ENCODE measurements at regions of chr10 and their contacts with region 1.

Region 1: GRCh38 chr10:103685880-103686669 is 169.3 kb downstream of the SH3PXD2A start:
- DNase-seq: peak; percentile 86
- H3K4me3 ChIP-seq: peak overlapping the region in 1 of 2 experiments; percentile 24; a peak in 1 of 4 replicates
- H3K27ac ChIP-seq: no peak overlapping the region
- H3K4me1 ChIP-seq: peaks cover 0 to 4% of the 10 kb centered on the region in 2 experiments; a peak in 1 of 4 replicates
- H3K27me3 ChIP-seq: no peaks in the 10 kb centered on the region
- CTCF ChIP-seq: peak; percentile 95
- EP300 ChIP-seq: no peak
- RAD21 ChIP-seq: peak; percentile 85

Region 2: GRCh38 chr10:103542764-103543616 is 143.1 kb before region 1 on chr10:
- CTCF ChIA-PET with region 1: no interaction called
- POLR2A ChIA-PET with region 1: no interaction called
- DNase-seq: peak; percentile 82
- H3K4me3 ChIP-seq: peak overlapping the region; percentile 32 to 63; a peak in 3 of 4 replicates
- H3K27ac ChIP-seq: peak overlapping the region in 1 of 2 experiments; percentile 91; a peak in 2 of 4 replicates
- H3K4me1 ChIP-seq: peaks cover 8 to 43% of the 10 kb centered on the region in 2 experiments; a peak in 3 of 4 replicates
- H3K27me3 ChIP-seq: peaks cover 15% of the 10 kb centered on the region; the same call in 1 of the 2 replicates
- CTCF ChIP-seq: peak; percentile 60
- EP300 ChIP-seq: peak in 1 of 2 experiments; percentile 74; a peak in 2 of 4 replicates
- RAD21 ChIP-seq: peak; percentile 54

Region 3: GRCh38 chr10:103592186-103593021 is 93.7 kb before region 1 on chr10:
- CTCF ChIA-PET with region 1: interaction called, 129 read pairs
- POLR2A ChIA-PET with region 1: no interaction called
- DNase-seq: peak; percentile 91
- H3K4me3 ChIP-seq: no peak overlapping the region; a peak in 1 of 4 replicates
- H3K27ac ChIP-seq: peak overlapping the region in 1 of 2 experiments; percentile 7; a peak in 1 of 4 replicates
- H3K4me1 ChIP-seq: peaks cover 0 to 15% of the 10 kb centered on the region in 2 experiments; a peak in 1 of 4 replicates
- H3K27me3 ChIP-seq: no peaks in the 10 kb centered on the region
- CTCF ChIP-seq: peak; percentile 71
- EP300 ChIP-seq: no peak
- RAD21 ChIP-seq: peak; percentile 79

Region 4: DNA sequence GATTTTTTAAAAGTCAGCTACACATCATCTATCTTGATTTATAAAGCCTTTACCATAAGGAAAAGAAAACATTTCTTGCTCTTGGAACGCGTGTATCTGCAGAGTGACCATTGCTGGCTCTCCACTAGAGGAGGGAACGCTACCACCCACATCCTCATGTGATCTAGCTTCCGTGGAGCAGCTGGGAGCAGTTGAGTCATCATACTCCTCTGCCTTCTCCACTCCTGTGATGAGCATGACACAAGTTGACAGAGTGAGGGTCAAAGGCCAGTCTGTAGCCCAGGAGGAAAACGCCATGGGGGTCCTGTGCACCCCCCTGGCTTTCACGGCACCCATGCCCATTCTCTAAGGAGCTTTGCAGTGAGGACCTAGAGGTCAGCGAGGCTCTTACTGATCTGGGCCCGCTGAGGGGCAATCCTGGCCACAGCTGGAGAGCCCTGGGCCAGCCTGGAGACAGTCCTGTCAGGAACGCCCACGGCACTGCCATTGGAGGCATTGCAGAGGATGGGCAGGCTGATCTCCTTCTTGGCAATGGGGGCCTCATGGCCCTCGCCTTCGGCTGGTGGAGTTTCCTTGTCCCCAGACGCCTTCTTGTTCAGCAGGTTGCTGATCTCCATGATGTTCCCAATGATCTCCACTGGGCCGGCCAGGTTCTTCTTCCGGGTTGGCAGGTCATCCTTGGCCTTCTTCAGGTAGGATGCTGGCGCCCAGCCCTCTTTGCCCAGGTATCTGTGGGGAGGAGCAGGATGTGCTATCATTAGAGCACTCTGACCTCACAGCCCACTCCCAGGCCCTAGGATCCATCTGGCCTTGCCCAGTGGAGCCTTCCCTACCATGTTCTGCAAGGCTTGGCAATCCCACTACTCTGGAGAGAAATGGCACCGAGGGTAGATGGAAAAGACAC is 73.4 kb before region 1 on chr10:
- CTCF ChIA-PET with region 1: interaction called, 59 read pairs
- POLR2A ChIA-PET with region 1: no interaction called
- DNase-seq: no peak
- H3K4me3 ChIP-seq: no peak overlapping the region
- H3K27ac ChIP-seq: peak overlapping the region in 1 of 2 experiments; percentile 95; a peak in 2 of 4 replicates
- H3K4me1 ChIP-seq: peaks cover 0 to 67% of the 10 kb centered on the region in 2 experiments; a peak in 2 of 4 replicates
- H3K27me3 ChIP-seq: no peaks in the 10 kb centered on the region
- CTCF ChIP-seq: no peak
- EP300 ChIP-seq: no peak
- RAD21 ChIP-seq: no peak

Region 5: DNA sequence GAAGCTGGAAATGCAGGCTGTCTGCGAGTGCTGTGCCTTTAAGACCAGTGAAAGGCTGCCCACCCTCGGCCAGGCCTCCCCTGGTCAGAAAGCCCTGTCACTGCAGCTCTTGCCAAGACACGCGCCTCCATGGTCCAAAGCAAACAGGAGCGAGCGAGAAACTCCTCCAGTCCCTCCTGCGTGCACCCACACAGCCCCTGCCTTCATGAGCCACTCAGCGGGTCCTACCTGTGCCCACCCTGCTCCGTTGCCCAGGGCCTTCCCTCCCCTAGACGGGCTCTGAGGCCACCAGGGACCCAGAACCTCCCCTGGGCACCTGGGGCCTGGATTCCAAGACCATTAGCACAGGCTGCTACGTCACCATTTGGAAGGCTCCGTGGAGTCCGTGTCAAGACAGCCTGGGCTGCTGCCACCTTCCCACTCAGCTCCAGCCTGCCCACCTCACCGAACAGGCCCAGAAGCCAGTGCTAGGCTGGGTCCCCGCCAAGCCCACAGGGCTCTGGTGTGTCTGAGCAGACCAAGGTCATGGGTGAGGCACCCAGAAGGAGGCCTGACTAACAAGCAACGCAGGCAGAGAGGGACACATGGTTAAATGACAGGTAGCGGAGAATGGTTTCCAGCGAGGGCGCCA is 48.0 kb before region 1 on chr10:
- CTCF ChIA-PET with region 1: interaction called, 20 read pairs
- POLR2A ChIA-PET with region 1: no interaction called
- DNase-seq: no peak
- H3K4me3 ChIP-seq: no peak overlapping the region
- H3K27ac ChIP-seq: peak overlapping the region in 1 of 2 experiments; percentile 53; a peak in 1 of 4 replicates
- H3K4me1 ChIP-seq: peaks cover 0 to 62% of the 10 kb centered on the region in 2 experiments; a peak in 1 of 4 replicates
- H3K27me3 ChIP-seq: no peaks in the 10 kb centered on the region
- CTCF ChIP-seq: no peak
- EP300 ChIP-seq: no peak
- RAD21 ChIP-seq: no peak

Region 6: DNA sequence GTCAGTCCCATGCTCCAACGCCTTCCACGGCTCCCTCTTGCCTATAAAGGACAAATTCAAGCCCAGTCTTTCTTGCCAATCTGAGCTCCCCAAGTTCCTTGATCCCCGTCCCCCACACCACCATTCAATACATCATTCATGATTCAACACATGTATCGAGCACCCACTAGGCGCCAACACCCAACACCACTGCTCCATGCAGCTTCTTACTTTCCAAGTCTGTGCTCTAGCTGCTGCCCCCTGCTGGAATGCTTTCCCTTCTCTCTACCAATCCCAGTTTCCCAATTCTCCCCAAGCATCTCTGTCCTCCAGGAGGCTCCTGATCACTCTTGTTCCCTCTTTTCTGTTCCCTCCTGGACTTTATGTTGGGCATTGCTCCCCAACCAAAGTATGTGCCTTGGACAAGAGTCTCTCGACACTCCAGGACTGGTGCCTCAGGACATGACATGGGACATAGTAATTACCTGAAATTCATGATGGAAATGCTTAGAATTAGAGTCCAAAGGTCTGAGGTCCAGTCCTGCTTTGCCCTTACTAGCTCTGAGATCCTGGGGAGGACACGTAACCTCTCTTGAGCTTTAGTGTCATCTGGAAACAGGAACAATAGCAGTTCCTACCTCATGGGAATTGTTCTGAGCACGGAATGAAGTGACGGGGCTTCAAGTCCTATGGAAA is 19.9 kb before region 1 on chr10:
- CTCF ChIA-PET with region 1: interaction called, 16 read pairs
- POLR2A ChIA-PET with region 1: no interaction called
- DNase-seq: peak; percentile 68
- H3K4me3 ChIP-seq: no peak overlapping the region
- H3K27ac ChIP-seq: no peak overlapping the region
- H3K4me1 ChIP-seq: peaks cover 0 to 7% of the 10 kb centered on the region in 2 experiments; a peak in 1 of 4 replicates
- H3K27me3 ChIP-seq: no peaks in the 10 kb centered on the region
- CTCF ChIP-seq: peak; percentile 56
- EP300 ChIP-seq: no peak
- RAD21 ChIP-seq: peak; percentile 46

Region 7: DNA sequence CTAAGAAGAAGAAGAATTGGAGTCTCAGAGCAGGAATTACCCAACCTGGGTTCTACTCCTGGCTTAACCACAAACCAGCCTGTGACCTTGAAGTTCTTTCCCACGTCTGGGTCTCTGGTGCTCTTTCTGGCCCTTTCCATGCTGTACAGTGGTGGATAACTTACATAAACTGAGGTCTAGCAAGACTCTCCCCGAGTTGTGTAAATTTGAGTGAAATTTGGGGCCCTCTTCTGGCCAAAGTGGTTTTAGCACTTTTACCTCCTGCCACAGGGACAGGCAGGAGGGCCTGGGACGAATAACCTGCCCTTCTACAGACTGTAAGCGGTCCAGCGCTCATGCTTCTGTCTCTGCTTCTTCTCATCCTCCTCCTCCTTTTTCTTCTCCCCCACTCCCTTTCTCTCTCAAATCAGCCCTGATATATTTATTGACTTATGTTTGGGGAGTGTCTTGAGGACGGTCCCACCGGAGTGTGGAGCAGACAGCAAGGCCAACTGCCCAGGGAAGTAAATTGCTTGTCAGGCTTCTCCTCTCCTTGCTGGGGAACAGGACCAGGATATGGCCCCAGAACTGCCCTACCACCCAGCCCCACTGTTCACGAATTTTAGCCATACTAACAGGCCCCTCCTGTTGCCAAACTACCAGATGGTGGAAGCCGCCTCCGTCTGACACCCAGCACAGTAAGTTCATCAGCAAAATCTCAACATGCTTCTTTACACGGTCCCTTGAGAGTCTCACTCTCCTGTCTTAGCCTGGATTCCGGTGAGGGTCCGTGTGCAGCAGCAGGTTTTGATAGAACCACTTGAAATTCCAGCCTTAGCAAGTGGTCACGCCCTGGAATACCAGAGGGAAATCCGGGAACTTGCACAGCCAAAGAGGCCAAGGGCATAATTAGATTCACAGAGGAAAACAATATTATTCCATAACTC is 173.3 kb after region 1 on chr10:
- CTCF ChIA-PET with region 1: interaction called, 10 read pairs
- POLR2A ChIA-PET with region 1: no interaction called
- DNase-seq: peak; percentile 71
- H3K4me3 ChIP-seq: no peak overlapping the region
- H3K27ac ChIP-seq: no peak overlapping the region; a peak in 1 of 4 replicates
- H3K4me1 ChIP-seq: peaks cover 0 to 19% of the 10 kb centered on the region in 2 experiments; a peak in 2 of 4 replicates
- H3K27me3 ChIP-seq: no peaks in the 10 kb centered on the region
- CTCF ChIP-seq: peak; percentile 78
- EP300 ChIP-seq: no peak
- RAD21 ChIP-seq: peak; percentile 87

Measured in SK-N-SH (cell line).